CD8-positive, alpha-beta memory T cell (primary cell): ENCODE measurements at regions of chr6 and their contacts with region 1.

Region 1: GRCh38 chr6:32971581-32972352 is 3.4 kb downstream of the BRD2 start:
- DNase-seq: peak; percentile 99 to 100 (median 100)
- H3K4me3 ChIP-seq: peak overlapping the region; percentile 96
- H3K4me3 Mint-ChIP-seq: peak overlapping the region; percentile 96 to 100 (median 97)
- H3K27ac ChIP-seq: peak overlapping the region; percentile 97
- H3K27ac Mint-ChIP-seq: peak overlapping the region; percentile 96 to 100 (median 99)
- H3K4me1 ChIP-seq: peaks cover 33% of the 10 kb centered on the region
- H3K4me1 Mint-ChIP-seq: peaks cover 37 to 50% (median 41%) of the 10 kb centered on the region in 3 donors
- H3K27me3 ChIP-seq: no peaks in the 10 kb centered on the region
- H3K27me3 Mint-ChIP-seq: peaks cover 0 to 19% of the 10 kb centered on the region in 2 donors

Region 2: GRCh38 chr6:31197559-31198305 is 1774.0 kb before region 1 on chr6:
- CTCF ChIA-PET with region 1: no interaction called
- POLR2A ChIA-PET with region 1: no interaction called
- DNase-seq: peak; percentile 92 to 98 (median 95)
- H3K4me3 ChIP-seq: peak overlapping the region; percentile 80
- H3K4me3 Mint-ChIP-seq: peak overlapping the region; percentile 80 to 98 (median 87)
- H3K27ac ChIP-seq: peak overlapping the region; percentile 99
- H3K27ac Mint-ChIP-seq: peak overlapping the region; percentile 87 to 100 (median 94)
- H3K4me1 ChIP-seq: peaks cover 49% of the 10 kb centered on the region
- H3K4me1 Mint-ChIP-seq: peaks cover 57 to 74% (median 62%) of the 10 kb centered on the region in 3 donors
- H3K27me3 ChIP-seq: no peaks in the 10 kb centered on the region
- H3K27me3 Mint-ChIP-seq: peaks cover 0 to 3% of the 10 kb centered on the region in 2 donors

Region 3: DNA sequence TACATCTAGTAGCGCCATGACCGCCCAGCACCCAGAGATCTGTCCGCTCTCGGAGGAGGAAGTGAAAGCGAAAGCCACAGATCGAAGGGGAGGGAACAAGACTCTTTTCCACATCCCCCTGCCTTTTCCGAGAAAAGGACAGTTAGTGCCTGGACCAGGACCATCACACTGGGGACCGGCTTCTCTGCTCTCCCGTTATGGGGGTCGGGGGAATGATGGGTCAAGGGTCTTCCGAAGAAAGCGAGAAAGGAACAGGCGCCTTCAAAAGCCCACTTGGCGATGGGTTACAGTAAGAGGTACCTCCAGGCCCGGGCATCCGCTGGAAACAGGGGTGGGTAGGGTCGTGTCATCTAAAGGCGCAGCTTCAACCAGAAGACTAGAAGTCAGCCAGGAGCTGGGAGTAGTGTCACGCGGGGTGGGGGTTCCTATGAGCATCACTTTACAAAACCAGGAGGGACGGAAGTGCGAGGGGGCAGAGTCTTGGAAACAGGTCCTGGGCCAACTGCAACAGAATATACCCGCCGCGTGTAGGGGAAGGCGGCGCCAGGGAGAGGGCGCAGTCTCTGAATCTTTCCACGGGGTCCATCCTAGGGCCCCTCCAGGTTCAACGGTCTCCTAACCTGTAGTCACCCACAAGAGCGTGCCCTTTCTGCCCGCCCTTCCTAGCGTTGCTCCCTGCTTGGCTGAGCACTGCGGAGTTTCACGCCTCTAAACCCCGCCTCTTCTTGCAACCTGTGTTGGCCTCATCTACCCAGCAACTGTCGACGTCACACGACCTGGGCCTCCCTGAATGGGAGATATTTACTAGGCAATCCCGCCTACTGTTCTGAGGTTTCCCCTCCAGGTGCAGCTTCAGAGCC is 127.6 kb before region 1 on chr6 and contains the start of gene PSMB8:
- CTCF ChIA-PET with region 1: interaction called, 17 read pairs
- POLR2A ChIA-PET with region 1: interaction called, 85 read pairs
- DNase-seq: peak; percentile 93 to 99 (median 97)
- H3K4me3 ChIP-seq: peak within 1 kb of the TSS; percentile 99
- H3K4me3 Mint-ChIP-seq: peak within 1 kb of the TSS; percentile 94 to 99 (median 97)
- H3K27ac ChIP-seq: peak within 1 kb of the TSS; percentile 99
- H3K27ac Mint-ChIP-seq: peak within 1 kb of the TSS; percentile 96 to 100 (median 100)
- H3K4me1 ChIP-seq: peaks cover 78% of the 10 kb centered on the region
- H3K4me1 Mint-ChIP-seq: peaks cover 76 to 83% (median 82%) of the 10 kb centered on the region in 3 donors
- H3K27me3 ChIP-seq: no peaks in the 10 kb centered on the region
- H3K27me3 Mint-ChIP-seq: peaks cover 0 to 3% of the 10 kb centered on the region in 2 donors
- total RNA-seq, gene PSMB8: 311 to 326 TPM

Region 4: DNA sequence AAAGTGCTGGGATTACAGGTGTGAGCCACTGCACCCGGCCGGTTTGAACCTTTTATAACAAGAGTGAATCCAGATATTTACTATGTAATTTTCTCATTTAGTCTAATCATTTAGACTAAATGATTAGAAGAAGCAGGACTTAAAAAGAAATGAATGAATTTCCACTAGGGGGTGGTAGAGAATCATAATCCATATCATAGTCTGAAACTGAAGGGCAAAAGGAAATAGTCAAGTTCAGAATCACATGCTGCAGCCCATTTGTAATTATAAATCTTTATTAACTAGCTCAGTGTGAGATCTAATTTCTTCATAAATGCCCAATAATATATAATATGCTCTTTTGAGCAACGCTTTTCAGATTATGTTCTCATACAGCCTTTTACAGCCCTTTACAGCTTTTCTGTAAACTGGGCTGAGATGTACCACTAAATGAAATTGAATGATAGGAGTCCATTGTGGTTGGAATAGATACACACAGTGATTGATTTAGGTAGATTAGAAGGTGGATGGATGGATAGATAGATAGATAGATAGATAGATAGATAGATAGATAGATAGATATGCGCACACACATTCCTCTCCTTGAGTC is 86.0 kb before region 1 on chr6:
- CTCF ChIA-PET with region 1: interaction called, 10 read pairs
- POLR2A ChIA-PET with region 1: interaction called, 8 read pairs
- DNase-seq: peak in 2 of 5 donors; percentile 62 to 68
- H3K4me3 ChIP-seq: no peak overlapping the region
- H3K4me3 Mint-ChIP-seq: peak overlapping the region in 1 of 7 donors; percentile 3
- H3K27ac ChIP-seq: no peak overlapping the region
- H3K27ac Mint-ChIP-seq: no peak overlapping the region
- H3K4me1 ChIP-seq: no peaks in the 10 kb centered on the region
- H3K4me1 Mint-ChIP-seq: no peaks in the 10 kb centered on the region
- H3K27me3 ChIP-seq: no peaks in the 10 kb centered on the region
- H3K27me3 Mint-ChIP-seq: no peaks in the 10 kb centered on the region

Region 5: DNA sequence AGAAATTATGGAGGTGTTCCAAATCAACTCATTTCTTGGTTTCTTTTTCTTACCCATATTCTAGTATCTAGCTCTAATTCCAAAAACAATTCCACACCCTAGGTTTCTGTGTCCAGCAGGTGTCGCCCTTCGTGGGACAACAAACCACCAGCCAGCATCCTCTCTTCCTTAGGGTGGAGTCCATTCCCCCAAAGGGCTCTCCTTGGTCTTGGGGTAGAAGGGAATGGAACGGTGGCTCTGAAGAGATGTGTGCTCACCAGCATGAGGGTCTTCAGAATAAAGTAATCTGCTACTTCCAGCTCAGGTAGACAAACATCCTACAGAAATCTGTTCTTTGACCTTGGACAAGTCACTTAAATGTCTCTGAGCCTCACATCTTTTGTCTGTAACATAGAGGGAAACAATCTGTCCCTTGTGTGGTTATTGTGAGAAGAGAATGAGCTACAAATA is 38.1 kb before region 1 on chr6:
- CTCF ChIA-PET with region 1: interaction called, 98 read pairs
- POLR2A ChIA-PET with region 1: interaction called, 107 read pairs
- DNase-seq: peak; percentile 60 to 84 (median 68)
- H3K4me3 ChIP-seq: no peak overlapping the region
- H3K4me3 Mint-ChIP-seq: no peak overlapping the region
- H3K27ac ChIP-seq: no peak overlapping the region
- H3K27ac Mint-ChIP-seq: peak overlapping the region in 1 of 8 donors; percentile 24
- H3K4me1 ChIP-seq: no peaks in the 10 kb centered on the region
- H3K4me1 Mint-ChIP-seq: peaks cover 6 to 10% (median 7%) of the 10 kb centered on the region in 3 donors
- H3K27me3 ChIP-seq: no peaks in the 10 kb centered on the region
- H3K27me3 Mint-ChIP-seq: peaks cover 0 to 2% of the 10 kb centered on the region in 2 donors

Region 6: GRCh38 chr6:32952817-32953739 is 18.7 kb before region 1 on chr6 and contains the start of gene HLA-DMA:
- CTCF ChIA-PET with region 1: interaction called, 270 read pairs
- POLR2A ChIA-PET with region 1: interaction called, 164 read pairs
- DNase-seq: peak; percentile 55 to 84 (median 76)
- H3K4me3 ChIP-seq: peak within 1 kb of the TSS; percentile 62
- H3K4me3 Mint-ChIP-seq: peak within 1 kb of the TSS; percentile 79 to 93 (median 85)
- H3K27ac ChIP-seq: no peak within 1 kb of the TSS
- H3K27ac Mint-ChIP-seq: peak within 1 kb of the TSS; percentile 77 to 97 (median 90)
- H3K4me1 ChIP-seq: peaks cover 23% of the 10 kb centered on the region
- H3K4me1 Mint-ChIP-seq: peaks cover 42 to 83% (median 55%) of the 10 kb centered on the region in 3 donors
- H3K27me3 ChIP-seq: no peaks in the 10 kb centered on the region
- H3K27me3 Mint-ChIP-seq: no peaks in the 10 kb centered on the region
- total RNA-seq, gene HLA-DMA: 14.0 to 16.5 TPM